Activated naive CD4-positive, alpha-beta T cell treated with anti-CD3 and anti-CD28 coated beads, Interleukin-2, amount 10 ng/mL, durations not matched to agents 7 days and 5 days (primary cell): ENCODE measurements at regions of chr11 and their contacts with region 1.

Region 1: DNA sequence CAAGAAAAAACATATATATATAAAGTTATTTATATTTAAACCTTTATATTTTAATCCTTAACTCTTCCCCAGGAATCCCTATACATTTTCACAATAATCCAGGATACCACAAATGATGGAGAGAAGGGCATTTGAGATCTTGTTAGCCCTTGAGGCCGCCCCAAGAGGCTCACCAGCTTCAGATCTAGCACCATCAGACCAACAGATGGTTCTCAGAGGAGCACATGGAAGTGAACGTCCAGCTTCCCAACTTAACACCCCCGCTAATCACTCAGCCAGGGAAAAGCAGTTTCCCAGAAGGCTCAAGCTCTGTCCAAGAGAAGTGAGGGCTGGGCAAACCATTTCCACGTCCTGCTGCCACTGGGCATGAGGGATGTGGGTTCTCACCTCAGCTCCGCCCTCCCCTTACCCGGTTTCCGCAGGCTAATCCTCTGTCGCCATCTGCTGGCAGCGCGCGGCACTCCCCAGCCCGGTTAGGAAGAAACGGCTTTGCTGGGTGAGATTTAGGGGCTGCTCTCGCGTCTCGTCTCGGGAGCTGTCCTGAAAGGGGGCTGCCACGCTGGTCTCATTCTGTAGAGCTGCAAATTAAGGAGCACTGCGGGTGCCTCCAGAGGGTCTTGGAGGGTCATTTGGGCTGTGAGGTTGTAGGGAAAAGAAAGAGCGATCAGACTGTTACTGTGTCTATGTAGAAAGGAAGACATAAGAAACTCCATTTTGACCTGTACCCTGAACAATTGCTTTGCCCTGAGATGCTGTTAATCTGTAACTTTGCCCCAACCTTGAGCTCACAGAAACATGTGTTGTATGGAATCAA is 6.8 kb upstream of the FAM111A start:
- DNase-seq: peak; percentile 92
- H3K4me3 Mint-ChIP-seq: no peak overlapping the region
- H3K27ac Mint-ChIP-seq: no peak overlapping the region
- H3K4me1 Mint-ChIP-seq: peaks cover 17% of the 10 kb centered on the region
- H3K27me3 Mint-ChIP-seq: no peaks in the 10 kb centered on the region

Region 2: GRCh38 chr11:59053387-59053786 is 82.5 kb before region 1 on chr11:
- CTCF ChIA-PET with region 1: interaction called, 21 read pairs
- DNase-seq: peak; percentile 87
- H3K4me3 Mint-ChIP-seq: no peak overlapping the region
- H3K27ac Mint-ChIP-seq: no peak overlapping the region
- H3K4me1 Mint-ChIP-seq: peaks cover 7% of the 10 kb centered on the region
- H3K27me3 Mint-ChIP-seq: peaks cover 14% of the 10 kb centered on the region

Region 3: DNA sequence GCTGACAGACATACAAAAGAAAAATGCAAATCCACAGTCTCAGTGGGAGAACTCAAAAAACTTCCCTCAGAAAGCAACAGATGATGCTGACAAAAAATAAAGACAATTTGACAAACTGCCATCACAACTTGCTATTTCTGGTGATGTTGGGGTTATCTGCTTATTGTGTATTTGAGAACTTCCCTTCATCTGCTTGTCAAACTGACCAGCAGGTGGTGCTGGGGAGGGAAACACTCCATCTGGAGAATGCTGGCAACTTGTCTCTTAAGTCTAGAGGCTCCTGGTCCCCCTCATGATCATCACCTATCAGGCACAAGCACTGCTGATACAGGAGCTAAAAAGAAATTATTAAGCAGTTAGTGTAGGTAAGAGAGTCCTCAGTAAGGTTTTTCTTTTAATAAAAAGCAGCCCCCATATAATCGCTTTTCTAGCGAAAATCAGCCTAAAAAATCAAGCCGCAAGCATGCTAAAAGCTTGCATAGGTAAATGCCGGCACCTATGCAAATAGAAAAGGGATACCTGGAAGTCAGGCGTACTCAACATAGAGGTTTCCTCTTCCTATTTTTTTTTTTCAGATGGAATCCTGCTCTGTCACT is 38.6 kb before region 1 on chr11:
- CTCF ChIA-PET with region 1: interaction called, 30 read pairs
- DNase-seq: peak; percentile 82
- H3K4me3 Mint-ChIP-seq: no peak overlapping the region
- H3K27ac Mint-ChIP-seq: no peak overlapping the region
- H3K4me1 Mint-ChIP-seq: peaks cover 21% of the 10 kb centered on the region
- H3K27me3 Mint-ChIP-seq: peaks cover 30% of the 10 kb centered on the region

Region 4: GRCh38 chr11:59106363-59107336 is 29.2 kb before region 1 on chr11 and contains the start of gene FAM111B:
- CTCF ChIA-PET with region 1: interaction called, 28 read pairs
- DNase-seq: peak; percentile 89
- H3K4me3 Mint-ChIP-seq: peak within 1 kb of the TSS; percentile 94
- H3K27ac Mint-ChIP-seq: peak within 1 kb of the TSS; percentile 90
- H3K4me1 Mint-ChIP-seq: peaks cover 77% of the 10 kb centered on the region
- H3K27me3 Mint-ChIP-seq: peaks cover 20% of the 10 kb centered on the region